ENCODE measurements at regions of chr4 and their contacts with region 1.

Region 1: DNA sequence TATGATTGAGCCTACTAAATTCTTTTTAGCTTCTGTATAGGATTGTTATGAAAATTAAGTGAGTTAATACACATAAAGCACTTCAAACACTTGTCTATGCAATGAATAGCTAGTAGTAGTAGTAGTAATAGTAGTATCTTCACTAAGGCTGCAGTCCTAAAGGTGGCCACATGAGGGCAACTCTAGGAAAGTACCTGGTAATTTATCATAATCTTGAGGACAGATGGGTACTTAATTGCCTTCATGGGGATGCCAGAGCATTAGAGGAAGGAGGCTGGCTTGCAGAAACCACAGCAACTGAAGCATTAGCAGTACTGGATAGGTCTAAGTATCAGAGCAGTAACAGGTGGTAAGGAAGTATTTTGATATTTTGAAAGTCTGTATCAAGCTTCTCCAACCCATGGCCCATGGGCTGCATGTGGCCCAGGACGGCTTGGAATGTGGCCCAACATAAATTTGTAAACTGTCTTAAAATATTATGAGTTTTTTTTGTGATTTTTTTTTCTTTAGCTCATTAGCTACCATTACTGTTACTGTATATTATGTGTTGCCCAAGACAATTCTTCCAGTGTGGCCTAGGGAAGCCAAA is 17.3 kb downstream of the NIPAL1 start:
- DNase-seq: peak; percentile 69
- H3K4me3 Mint-ChIP-seq: no peak overlapping the region
- H3K27ac Mint-ChIP-seq: no peak overlapping the region
- H3K4me1 Mint-ChIP-seq: peaks cover 37% of the 10 kb centered on the region
- H3K27me3 Mint-ChIP-seq: peaks cover 6% of the 10 kb centered on the region

Region 2: DNA sequence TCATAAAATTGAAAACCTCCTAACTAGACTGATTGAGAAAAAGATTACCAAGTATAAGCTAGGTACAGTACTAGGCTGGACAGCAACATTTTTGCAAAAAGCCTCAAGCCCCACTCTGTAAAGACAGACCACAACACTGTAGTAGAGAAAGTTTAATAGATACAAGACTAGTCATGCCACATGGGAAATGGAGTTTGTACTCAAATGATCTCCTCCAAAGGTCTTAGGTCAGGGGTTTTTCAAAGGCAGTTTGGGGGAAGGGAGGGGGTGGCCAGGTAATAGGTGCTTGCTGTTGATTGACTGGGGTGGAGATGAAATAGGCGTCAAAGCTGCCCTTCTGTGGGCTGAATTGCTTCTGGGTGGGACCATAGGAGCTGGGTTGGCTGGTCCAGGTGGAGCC is 31.7 kb before region 1 on chr4:
- CTCF ChIA-PET with region 1: interaction called, 29 read pairs
- POLR2A ChIA-PET with region 1: no interaction called
- intact Hi-C with region 1: no loop called
- DNase-seq: no peak
- H3K4me3 Mint-ChIP-seq: no peak overlapping the region
- H3K27ac Mint-ChIP-seq: no peak overlapping the region
- H3K4me1 Mint-ChIP-seq: no peaks in the 10 kb centered on the region
- H3K27me3 Mint-ChIP-seq: peaks cover 6% of the 10 kb centered on the region

Region 3: GRCh38 chr4:48065587-48066052 is 31.7 kb after region 1 on chr4:
- CTCF ChIA-PET with region 1: interaction called, 16 read pairs
- POLR2A ChIA-PET with region 1: interaction called, 9 read pairs
- intact Hi-C with region 1: loop called (anchors 1 kb)
- DNase-seq: peak; percentile 20
- H3K4me3 Mint-ChIP-seq: no peak overlapping the region
- H3K27ac Mint-ChIP-seq: no peak overlapping the region
- H3K4me1 Mint-ChIP-seq: peaks cover 21% of the 10 kb centered on the region
- H3K27me3 Mint-ChIP-seq: no peaks in the 10 kb centered on the region

Region 4: GRCh38 chr4:48103483-48104139 is 69.7 kb after region 1 on chr4:
- CTCF ChIA-PET with region 1: interaction called, 33 read pairs
- POLR2A ChIA-PET with region 1: interaction called, 3 read pairs
- intact Hi-C with region 1: loop called (anchors 1 kb)
- DNase-seq: peak; percentile 60
- H3K4me3 Mint-ChIP-seq: no peak overlapping the region
- H3K27ac Mint-ChIP-seq: peak overlapping the region; percentile 83
- H3K4me1 Mint-ChIP-seq: peaks cover 30% of the 10 kb centered on the region
- H3K27me3 Mint-ChIP-seq: no peaks in the 10 kb centered on the region

Region 5: GRCh38 chr4:48141048-48141447 is 107.1 kb after region 1 on chr4:
- CTCF ChIA-PET with region 1: interaction called, 38 read pairs
- POLR2A ChIA-PET with region 1: interaction called, 3 read pairs
- intact Hi-C with region 1: loop called (anchors 1 kb)
- DNase-seq: no peak
- H3K4me3 Mint-ChIP-seq: no peak overlapping the region
- H3K27ac Mint-ChIP-seq: no peak overlapping the region
- H3K4me1 Mint-ChIP-seq: peaks cover 46% of the 10 kb centered on the region
- H3K27me3 Mint-ChIP-seq: no peaks in the 10 kb centered on the region